ENCODE measurements at regions of chr3 and their contacts with region 1.

Region 1: DNA sequence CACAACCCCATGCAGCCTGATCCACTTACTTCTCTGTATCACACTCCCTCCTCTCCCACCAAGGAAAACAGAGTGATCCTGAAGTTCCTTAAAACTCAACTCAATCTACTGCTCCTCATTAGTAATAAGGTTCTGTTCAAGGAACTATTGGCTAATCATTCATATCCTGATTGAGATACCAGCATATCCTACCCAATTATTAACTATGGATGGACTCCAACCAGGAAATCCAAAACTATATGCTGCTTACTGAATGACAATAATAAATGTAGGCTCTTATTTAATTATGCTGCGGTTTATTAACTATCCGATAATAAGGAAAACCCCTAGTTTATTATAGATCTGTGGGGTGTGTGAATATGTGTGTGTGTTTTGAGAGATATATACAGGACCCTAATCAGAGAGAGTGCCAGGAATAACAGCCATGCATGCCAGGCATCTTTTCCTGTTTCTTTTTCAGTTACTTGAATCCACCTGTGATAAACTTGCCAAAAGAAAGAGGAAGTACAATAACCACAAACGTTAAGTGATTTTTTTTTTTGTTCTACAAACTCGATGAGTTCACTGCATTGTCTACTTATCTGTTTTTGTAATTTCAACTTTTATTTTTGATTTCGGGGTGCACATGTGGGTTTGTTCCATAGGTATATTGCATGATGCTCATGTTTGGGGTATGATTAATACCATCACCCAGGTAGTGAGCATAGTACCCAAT is 1031.7 kb upstream of the CFAP20DC start:
- DNase-seq: no peak
- H3K4me3 Mint-ChIP-seq: peak overlapping the region; percentile 47
- H3K27ac Mint-ChIP-seq: peak overlapping the region; percentile 98
- H3K4me1 Mint-ChIP-seq: peaks cover 67% of the 10 kb centered on the region
- H3K27me3 Mint-ChIP-seq: no peaks in the 10 kb centered on the region

Region 2: DNA sequence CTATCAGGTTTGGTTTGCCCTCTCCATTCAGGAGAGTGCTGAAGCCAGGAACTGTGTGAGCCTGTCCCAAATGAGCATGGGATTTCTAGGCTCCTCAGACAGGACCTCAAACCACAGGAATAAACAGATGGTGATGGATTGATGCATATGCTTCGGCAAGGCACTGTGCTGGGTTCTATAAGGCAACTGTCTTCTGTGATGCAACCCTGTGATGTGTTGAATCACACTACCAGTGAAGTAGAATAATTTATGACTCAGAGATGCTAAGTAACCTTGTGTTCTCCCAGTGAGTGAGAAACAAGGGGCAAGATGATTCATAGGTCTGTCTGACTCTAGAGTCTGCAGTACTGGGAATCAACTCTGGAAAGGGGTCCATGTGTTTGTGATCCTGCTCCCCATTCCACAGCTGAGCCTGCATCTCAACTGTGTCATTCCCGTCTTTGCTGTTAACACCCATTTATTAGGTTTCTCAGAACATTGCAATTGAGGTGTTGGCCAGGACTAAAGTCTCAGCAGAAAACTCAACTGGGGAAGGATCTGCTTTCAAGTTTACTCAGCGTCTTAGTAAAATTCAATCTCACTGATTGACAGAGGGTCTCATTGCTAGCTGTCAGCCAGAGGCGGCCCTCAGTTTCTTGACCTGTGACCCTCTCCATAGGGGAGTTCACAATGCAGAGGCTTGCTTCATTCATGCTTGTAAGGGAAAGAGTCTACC is 521.7 kb before region 1 on chr3:
- CTCF ChIA-PET with region 1: no interaction called
- intact Hi-C with region 1: loop called (anchors 5 kb)
- DNase-seq: peak; percentile 71
- H3K4me3 Mint-ChIP-seq: no peak overlapping the region
- H3K27ac Mint-ChIP-seq: peak overlapping the region; percentile 84
- H3K4me1 Mint-ChIP-seq: peaks cover 24% of the 10 kb centered on the region
- H3K27me3 Mint-ChIP-seq: no peaks in the 10 kb centered on the region

Region 3: GRCh38 chr3:60010781-60011180 is 70.8 kb before region 1 on chr3:
- CTCF ChIA-PET with region 1: interaction called, 3 read pairs
- intact Hi-C with region 1: loop called (anchors 1 kb)
- DNase-seq: peak; percentile 80
- H3K4me3 Mint-ChIP-seq: peak overlapping the region; percentile 75
- H3K27ac Mint-ChIP-seq: peak overlapping the region; percentile 97
- H3K4me1 Mint-ChIP-seq: peaks cover 87% of the 10 kb centered on the region
- H3K27me3 Mint-ChIP-seq: no peaks in the 10 kb centered on the region

Region 4: GRCh38 chr3:60046210-60046609 is 35.3 kb before region 1 on chr3:
- CTCF ChIA-PET with region 1: interaction called, 3 read pairs
- intact Hi-C with region 1: loop called (anchors 1 kb)
- DNase-seq: no peak
- H3K4me3 Mint-ChIP-seq: no peak overlapping the region
- H3K27ac Mint-ChIP-seq: peak overlapping the region; percentile 91
- H3K4me1 Mint-ChIP-seq: peaks cover 80% of the 10 kb centered on the region
- H3K27me3 Mint-ChIP-seq: no peaks in the 10 kb centered on the region

Region 5: DNA sequence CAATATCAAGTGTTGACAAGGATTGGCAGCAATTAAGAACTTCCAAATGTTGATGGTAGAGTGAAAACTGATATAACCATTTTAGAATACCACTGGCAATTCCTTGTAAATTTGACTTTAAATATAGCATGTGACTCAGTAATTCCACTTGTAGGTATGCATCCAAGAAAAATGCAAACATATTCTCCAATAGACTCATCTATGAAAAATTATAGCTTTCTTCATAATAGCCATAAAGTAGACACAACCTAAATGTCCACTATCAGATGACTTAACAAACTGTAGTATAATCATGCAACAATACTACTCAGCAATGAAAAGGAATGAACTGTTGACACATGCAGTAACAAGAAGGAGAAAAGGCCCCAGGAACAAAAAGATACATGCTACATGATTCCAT is 181.7 kb after region 1 on chr3:
- CTCF ChIA-PET with region 1: no interaction called
- intact Hi-C with region 1: loop called (anchors 5 kb)
- DNase-seq: no peak
- H3K4me3 Mint-ChIP-seq: no peak overlapping the region
- H3K27ac Mint-ChIP-seq: no peak overlapping the region
- H3K4me1 Mint-ChIP-seq: peaks cover 21% of the 10 kb centered on the region
- H3K27me3 Mint-ChIP-seq: no peaks in the 10 kb centered on the region

Region 6: DNA sequence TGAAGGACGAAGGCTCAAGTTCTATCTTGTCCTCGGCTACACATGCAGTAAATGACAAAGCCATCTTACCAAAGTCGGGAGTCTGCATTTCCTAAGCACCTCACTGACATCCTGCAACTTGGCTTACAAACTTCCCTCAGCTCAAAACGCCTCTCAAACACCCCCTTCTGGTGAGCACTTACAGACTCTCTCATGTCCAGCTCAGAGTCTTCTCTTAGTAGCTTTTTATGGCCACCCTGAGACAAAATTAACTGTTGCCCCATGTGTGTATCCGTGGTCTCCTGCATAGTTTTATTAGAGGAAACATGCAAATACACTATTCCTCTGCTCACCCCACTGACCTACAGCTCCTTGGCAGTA is 350.0 kb after region 1 on chr3:
- CTCF ChIA-PET with region 1: no interaction called
- intact Hi-C with region 1: loop called (anchors 5 kb)
- DNase-seq: peak; percentile 23
- H3K4me3 Mint-ChIP-seq: no peak overlapping the region
- H3K27ac Mint-ChIP-seq: no peak overlapping the region
- H3K4me1 Mint-ChIP-seq: peaks cover 25% of the 10 kb centered on the region
- H3K27me3 Mint-ChIP-seq: no peaks in the 10 kb centered on the region